Tibial artery (tissue), 4 donors: ENCODE measurements at regions of chr3 and their contacts with region 1.

Region 1: DNA sequence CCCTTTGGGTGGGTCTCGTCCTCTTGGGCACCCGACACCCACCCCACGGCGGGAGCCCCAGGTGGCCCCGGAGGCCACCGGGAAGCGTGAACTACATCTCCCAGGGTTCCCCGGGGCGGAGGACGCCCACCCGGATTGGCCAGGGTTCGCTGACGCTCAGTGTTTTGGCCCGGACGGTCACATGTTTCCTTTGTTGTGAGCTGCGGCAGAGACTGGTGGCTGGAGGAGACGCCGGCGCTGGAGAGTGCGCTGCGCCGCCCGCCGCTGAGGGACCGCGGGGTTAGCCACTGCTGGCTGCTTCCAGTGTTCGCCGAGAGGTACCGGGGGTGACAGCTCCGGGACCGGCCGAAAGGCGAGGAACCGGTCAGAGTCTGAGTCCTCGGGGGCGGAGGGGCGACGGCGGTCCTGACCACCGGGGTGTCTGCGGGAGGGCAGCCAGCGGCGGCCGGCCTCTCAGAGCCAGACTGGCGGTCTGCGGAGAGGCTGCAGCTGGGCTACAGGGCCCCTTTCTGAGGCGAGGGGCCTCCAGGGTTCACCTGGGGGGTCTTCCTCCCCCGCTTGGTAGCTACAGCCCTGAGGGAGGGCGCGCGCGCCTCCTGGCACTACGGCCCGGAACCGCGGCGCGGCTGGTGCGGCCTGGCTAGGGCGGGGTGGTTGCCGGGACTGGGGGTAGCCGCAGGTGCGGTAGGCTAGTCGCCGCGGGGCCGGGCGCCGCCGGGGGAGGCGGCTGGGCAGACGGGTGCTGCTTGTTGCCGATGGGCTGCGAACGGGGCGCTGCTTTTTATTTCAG is at the start of gene KLHL24:
- DNase-seq: peak; percentile 95 to 97
- H3K4me3 ChIP-seq: peak within 1 kb of the TSS; percentile 90 to 91
- H3K27ac ChIP-seq: peak within 1 kb of the TSS; percentile 97 to 99
- H3K4me1 ChIP-seq: peaks cover 0 to 31% (median 12%) of the 10 kb centered on the region in 4 donors
- H3K27me3 ChIP-seq: no peaks in the 10 kb centered on the region
- CTCF ChIP-seq: peak in 1 of 2 experiments; percentile 7

Region 2: GRCh38 chr3:183099026-183099837 is 536.4 kb before region 1 on chr3 and contains the start of gene MCCC1:
- intact Hi-C with region 1: loop called (anchors 5 kb)
- DNase-seq: peak; percentile 98 to 99
- H3K4me3 ChIP-seq: peak within 1 kb of the TSS; percentile 84 to 86
- H3K27ac ChIP-seq: peak within 1 kb of the TSS; percentile 91 to 92
- H3K4me1 ChIP-seq: peaks cover 0 to 31% (median 19%) of the 10 kb centered on the region in 4 donors
- H3K27me3 ChIP-seq: no peaks in the 10 kb centered on the region
- CTCF ChIP-seq: no peak

Region 3: GRCh38 chr3:183697610-183698317 is 62.1 kb after region 1 on chr3 and contains the start of gene YEATS2:
- intact Hi-C with region 1: loop called (anchors 5 kb)
- DNase-seq: peak; percentile 35 to 74
- H3K4me3 ChIP-seq: peak within 1 kb of the TSS; percentile 83 to 98
- H3K27ac ChIP-seq: peak within 1 kb of the TSS; percentile 84 to 93
- H3K4me1 ChIP-seq: peaks cover 0 to 27% (median 6%) of the 10 kb centered on the region in 4 donors
- H3K27me3 ChIP-seq: no peaks in the 10 kb centered on the region
- CTCF ChIP-seq: no peak

Region 4: DNA sequence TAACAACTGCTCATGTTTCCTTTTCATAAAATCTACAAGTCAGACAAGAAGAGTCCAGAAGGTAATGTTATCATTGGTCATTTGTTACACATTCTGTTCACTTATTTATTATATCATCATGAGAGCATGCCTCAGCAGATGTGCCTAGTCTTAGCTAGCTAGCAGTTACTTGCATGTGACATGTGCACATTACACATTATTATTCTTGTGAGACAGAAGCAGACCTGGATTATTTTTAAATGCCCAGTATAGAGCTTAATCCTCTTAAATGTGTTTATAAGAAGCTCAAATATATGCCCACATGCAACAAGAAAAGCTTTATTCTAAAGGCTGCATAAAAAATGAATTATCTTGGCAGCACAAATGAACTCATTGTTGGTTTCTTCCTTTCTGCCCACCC is 74.6 kb after region 1 on chr3:
- intact Hi-C with region 1: no loop called
- DNase-seq: no peak
- H3K4me3 ChIP-seq: no peak overlapping the region
- H3K27ac ChIP-seq: no peak overlapping the region
- H3K4me1 ChIP-seq: no peaks in the 10 kb centered on the region
- H3K27me3 ChIP-seq: no peaks in the 10 kb centered on the region
- CTCF ChIP-seq: no peak